HepG2 (cell line): ENCODE measurements at regions of chr1 and their contacts with region 1.

Region 1: GRCh38 chr1:113396585-113396984 is 6.3 kb downstream of the MAGI3 start:
- DNase-seq: no peak
- ATAC-seq: no peak
- H3K4me3 ChIP-seq: no peak overlapping the region
- H3K27ac ChIP-seq: no peak overlapping the region
- H3K4me1 ChIP-seq: peaks cover 48% of the 10 kb centered on the region
- H3K27me3 ChIP-seq: no peaks in the 10 kb centered on the region; a peak in 1 of 5 replicates
- CTCF ChIP-seq: no peak
- EP300 ChIP-seq: no peak
- POLR2A ChIP-seq: no peak
- RAD21 ChIP-seq: no peak

Region 2: GRCh38 chr1:113429443-113430153 is 33.0 kb after region 1 on chr1:
- CTCF ChIA-PET with region 1: no interaction called
- POLR2A ChIA-PET with region 1: interaction called, 3 read pairs
- in situ Hi-C with region 1: no loop called
- intact Hi-C with region 1: loop called (anchors 5 kb)
- DNase-seq: no peak
- ATAC-seq: no peak
- H3K4me3 ChIP-seq: no peak overlapping the region
- H3K27ac ChIP-seq: no peak overlapping the region
- H3K4me1 ChIP-seq: peaks cover 30% of the 10 kb centered on the region
- H3K27me3 ChIP-seq: no peaks in the 10 kb centered on the region
- CTCF ChIP-seq: no peak
- EP300 ChIP-seq: no peak
- POLR2A ChIP-seq: no peak
- RAD21 ChIP-seq: no peak